ENCODE measurements at regions of chr19 and their contacts with region 1.

Region 1: GRCh38 chr19:18919086-18919899 is at the starts of genes COPE and DDX49:
- DNase-seq: peak; percentile 95 to 100
- H3K4me3 ChIP-seq: peak within 1 kb of the TSS; percentile 72
- H3K27ac ChIP-seq: peak within 1 kb of the TSS; percentile 75
- H3K4me1 ChIP-seq: peaks cover 17% of the 10 kb centered on the region
- H3K27me3 ChIP-seq: no peaks in the 10 kb centered on the region
- CTCF ChIP-seq: no peak
- total RNA-seq, gene COPE: 190 and 221 TPM in 2 replicates
- total RNA-seq, gene DDX49: 41.2 and 46.3 TPM in 2 replicates

Region 2: DNA sequence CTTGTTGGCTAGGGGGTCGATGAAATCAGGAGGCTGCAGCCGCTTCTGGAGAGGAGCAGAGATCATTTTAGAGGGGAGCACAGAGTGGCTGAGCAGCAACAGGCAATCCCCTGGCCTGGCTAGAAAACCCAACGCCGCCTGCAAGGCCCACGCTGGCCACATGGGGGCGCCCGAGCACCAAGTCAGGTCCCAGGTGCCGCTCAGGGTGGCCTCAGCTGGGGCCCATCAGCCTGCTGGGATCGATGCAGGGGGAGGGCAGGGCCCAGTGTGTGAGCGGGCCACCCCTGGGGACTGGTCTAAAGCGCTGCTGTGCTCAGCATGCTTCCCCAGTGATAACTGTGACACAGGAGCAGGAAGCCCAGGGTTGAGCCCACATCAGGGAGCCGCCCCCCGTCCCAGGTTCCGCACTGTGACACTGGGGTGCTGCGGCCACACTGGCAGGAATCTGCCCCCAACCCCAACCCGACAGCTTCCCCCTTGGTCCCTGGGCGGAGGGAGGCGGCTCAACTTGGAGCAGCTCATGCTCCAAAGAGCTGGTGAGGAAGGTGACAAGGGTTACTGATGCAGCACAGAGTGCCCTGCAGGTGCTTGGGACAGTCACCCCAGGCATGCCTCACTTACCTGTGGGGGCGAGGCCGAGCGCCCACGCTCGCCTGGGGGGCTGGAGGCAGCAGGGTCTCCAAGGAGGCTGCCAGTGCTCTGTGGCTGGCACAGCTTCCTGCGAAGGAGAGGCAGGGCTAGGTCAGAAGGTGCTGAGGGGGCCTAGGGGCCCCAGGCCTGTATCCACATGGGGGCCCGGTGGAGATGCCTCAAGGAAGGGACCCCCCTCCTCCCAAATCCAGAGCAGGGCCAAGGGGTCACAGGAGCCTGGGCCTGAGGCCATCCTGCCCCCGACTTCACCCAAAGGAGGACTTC is 468.1 kb before region 1 on chr19:
- CTCF ChIA-PET with region 1: no interaction called
- POLR2A ChIA-PET with region 1: no interaction called
- intact Hi-C with region 1: loop called (anchors 2 kb)
- DNase-seq: peak; percentile 54 to 83
- H3K4me3 ChIP-seq: no peak overlapping the region
- H3K27ac ChIP-seq: no peak overlapping the region
- H3K4me1 ChIP-seq: peaks cover 17% of the 10 kb centered on the region
- H3K27me3 ChIP-seq: no peaks in the 10 kb centered on the region
- CTCF ChIP-seq: peak; percentile 99

Region 3: DNA sequence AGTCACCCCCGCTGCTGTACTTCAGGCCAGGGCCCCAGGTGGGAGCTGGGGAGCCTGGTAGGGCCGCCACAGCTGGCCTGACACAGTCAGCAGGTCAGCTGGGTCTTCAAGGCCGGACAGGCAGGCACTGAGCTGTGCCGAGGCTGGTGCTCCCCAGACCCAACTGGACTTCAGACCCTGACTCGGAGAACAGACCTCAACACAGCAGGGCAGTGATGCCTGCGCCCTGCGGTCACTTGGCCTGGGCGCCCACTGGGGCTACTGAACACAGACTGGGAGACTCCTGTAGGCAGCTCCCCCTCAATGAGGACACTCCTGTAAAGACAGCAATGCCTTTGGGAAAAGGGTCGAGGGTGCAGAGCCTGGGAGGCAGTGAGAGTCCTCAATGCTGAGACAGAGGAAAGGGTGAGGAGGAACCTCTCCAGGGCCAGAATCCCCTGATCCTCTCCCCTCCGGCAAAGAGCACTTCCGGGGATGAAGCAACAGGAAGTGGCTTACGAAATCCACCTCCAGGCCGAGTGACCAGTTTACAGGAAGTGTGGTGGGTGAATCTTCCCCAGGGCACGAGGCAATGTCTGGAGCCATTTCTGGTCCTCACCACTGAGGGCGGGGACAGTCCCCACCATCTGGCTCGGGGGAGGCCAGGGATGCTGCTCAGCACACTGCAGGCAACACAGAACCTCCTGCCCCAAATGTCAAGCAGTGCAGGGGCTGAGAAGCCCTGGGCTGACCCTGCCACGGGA is 440.6 kb before region 1 on chr19:
- CTCF ChIA-PET with region 1: no interaction called
- POLR2A ChIA-PET with region 1: no interaction called
- intact Hi-C with region 1: loop called (anchors 10 kb)
- DNase-seq: peak; percentile 55 to 79
- H3K4me3 ChIP-seq: no peak overlapping the region
- H3K27ac ChIP-seq: peak overlapping the region; percentile 36
- H3K4me1 ChIP-seq: peaks cover 22% of the 10 kb centered on the region
- H3K27me3 ChIP-seq: no peaks in the 10 kb centered on the region
- CTCF ChIP-seq: no peak

Region 4: GRCh38 chr19:18856385-18857126 is 62.7 kb before region 1 on chr19:
- CTCF ChIA-PET with region 1: no interaction called
- POLR2A ChIA-PET with region 1: no interaction called
- intact Hi-C with region 1: no loop called
- DNase-seq: no peak
- H3K4me3 ChIP-seq: no peak overlapping the region
- H3K27ac ChIP-seq: no peak overlapping the region
- H3K4me1 ChIP-seq: no peaks in the 10 kb centered on the region
- H3K27me3 ChIP-seq: no peaks in the 10 kb centered on the region
- CTCF ChIP-seq: peak; percentile 55

Region 5: DNA sequence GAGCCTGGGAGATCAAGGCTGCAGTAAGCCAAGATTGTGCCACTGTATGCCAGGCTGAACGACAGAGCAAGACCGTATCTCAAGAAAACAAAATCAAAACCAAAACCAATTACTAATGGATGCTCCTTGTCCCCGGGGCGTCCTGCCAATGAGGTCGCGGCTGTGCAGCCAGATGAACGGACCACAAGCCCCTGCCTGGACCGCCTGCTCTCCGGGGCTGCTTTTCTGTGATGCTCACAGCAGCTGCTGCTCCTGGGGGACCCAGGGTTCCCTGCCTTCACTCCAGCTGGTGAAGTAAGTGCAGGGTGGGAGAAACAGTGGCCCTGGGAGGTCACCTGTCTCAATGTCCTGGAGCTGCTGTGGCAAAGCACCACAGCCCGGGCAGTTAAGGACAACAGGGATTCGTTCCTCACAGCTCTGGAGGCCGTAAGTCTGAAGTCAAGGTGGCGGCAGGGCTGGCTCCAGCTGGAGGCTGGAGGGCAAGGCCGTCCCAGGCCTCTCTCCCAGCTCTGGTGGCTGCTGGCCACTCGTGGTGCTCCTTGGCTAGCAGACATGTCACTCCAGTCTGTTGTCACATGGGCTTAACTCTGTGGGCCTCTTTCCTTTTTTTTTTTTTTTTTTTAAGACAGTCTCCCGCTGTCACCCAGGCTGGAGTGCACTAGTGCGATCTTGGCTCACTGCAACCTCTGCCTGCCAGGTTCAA is 10.2 kb before region 1 on chr19:
- CTCF ChIA-PET with region 1: no interaction called
- POLR2A ChIA-PET with region 1: interaction called, 10 read pairs
- intact Hi-C with region 1: no loop called
- DNase-seq: no peak
- H3K4me3 ChIP-seq: no peak overlapping the region
- H3K27ac ChIP-seq: no peak overlapping the region
- H3K4me1 ChIP-seq: no peaks in the 10 kb centered on the region
- H3K27me3 ChIP-seq: no peaks in the 10 kb centered on the region
- CTCF ChIP-seq: no peak

Region 6: GRCh38 chr19:18940769-18941407 is 21.6 kb after region 1 on chr19 and contains the start of gene HOMER3:
- CTCF ChIA-PET with region 1: no interaction called
- POLR2A ChIA-PET with region 1: interaction called, 4 read pairs
- intact Hi-C with region 1: loop called (anchors 2 kb)
- DNase-seq: peak in 1 of 2 experiments; percentile 75
- H3K4me3 ChIP-seq: peak within 1 kb of the TSS; percentile 81
- H3K27ac ChIP-seq: no peak within 1 kb of the TSS
- H3K4me1 ChIP-seq: peaks cover 10% of the 10 kb centered on the region
- H3K27me3 ChIP-seq: no peaks in the 10 kb centered on the region
- CTCF ChIP-seq: no peak
- total RNA-seq, gene HOMER3: 55.7 and 62.5 TPM in 2 replicates

Region 7: GRCh38 chr19:18995804-18996241 is 76.5 kb after region 1 on chr19:
- CTCF ChIA-PET with region 1: no interaction called
- POLR2A ChIA-PET with region 1: no interaction called
- intact Hi-C with region 1: no loop called
- DNase-seq: peak; percentile 36 to 68
- H3K4me3 ChIP-seq: no peak overlapping the region
- H3K27ac ChIP-seq: no peak overlapping the region
- H3K4me1 ChIP-seq: peaks cover 3% of the 10 kb centered on the region; the same call in 1 of the 2 replicates
- H3K27me3 ChIP-seq: no peaks in the 10 kb centered on the region
- CTCF ChIP-seq: peak; percentile 63

Region 8: GRCh38 chr19:20325151-20325550 is 1405.9 kb after region 1 on chr19:
- CTCF ChIA-PET with region 1: no interaction called
- POLR2A ChIA-PET with region 1: no interaction called
- intact Hi-C with region 1: no loop called
- DNase-seq: no peak
- H3K4me3 ChIP-seq: no peak overlapping the region
- H3K27ac ChIP-seq: no peak overlapping the region
- H3K4me1 ChIP-seq: no peaks in the 10 kb centered on the region
- H3K27me3 ChIP-seq: no peaks in the 10 kb centered on the region
- CTCF ChIP-seq: no peak